PC-9 (cell line): ENCODE measurements at regions of chr12 and their contacts with region 1.

Region 1: GRCh38 chr12:99879439-99879838 is 105.3 kb downstream of the ANKS1B start:
- DNase-seq: no peak
- H3K4me3 ChIP-seq: no peak overlapping the region
- H3K27ac ChIP-seq: no peak overlapping the region
- H3K4me1 ChIP-seq: no peaks in the 10 kb centered on the region
- H3K27me3 ChIP-seq: peaks cover 23% of the 10 kb centered on the region; the same call in 1 of the 2 replicates
- CTCF ChIP-seq: no peak

Region 2: DNA sequence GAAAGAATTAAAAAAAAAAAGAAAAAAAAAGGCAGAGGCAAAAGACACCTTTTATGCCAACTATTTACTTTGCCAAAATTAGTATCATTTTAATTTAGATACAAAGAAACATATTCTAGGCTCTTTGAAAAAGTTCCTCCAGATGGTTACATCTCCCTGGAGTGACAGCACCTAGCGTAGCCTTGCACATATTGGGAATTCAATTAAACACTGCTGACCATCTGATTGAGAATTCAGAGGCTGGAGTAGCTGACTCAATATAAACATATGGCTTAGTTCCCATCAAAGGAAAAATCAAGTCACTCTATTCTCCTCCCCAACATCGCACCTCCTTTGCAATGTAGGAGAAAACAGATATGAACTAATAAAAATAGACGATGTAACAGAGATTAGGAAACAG is 68.9 kb after region 1 on chr12:
- CTCF ChIA-PET with region 1: no interaction called
- POLR2A ChIA-PET with region 1: no interaction called
- intact Hi-C with region 1: no loop called
- DNase-seq: no peak
- H3K4me3 ChIP-seq: no peak overlapping the region
- H3K27ac ChIP-seq: no peak overlapping the region
- H3K4me1 ChIP-seq: no peaks in the 10 kb centered on the region
- H3K27me3 ChIP-seq: peaks cover 47% of the 10 kb centered on the region
- CTCF ChIP-seq: no peak

Region 3: DNA sequence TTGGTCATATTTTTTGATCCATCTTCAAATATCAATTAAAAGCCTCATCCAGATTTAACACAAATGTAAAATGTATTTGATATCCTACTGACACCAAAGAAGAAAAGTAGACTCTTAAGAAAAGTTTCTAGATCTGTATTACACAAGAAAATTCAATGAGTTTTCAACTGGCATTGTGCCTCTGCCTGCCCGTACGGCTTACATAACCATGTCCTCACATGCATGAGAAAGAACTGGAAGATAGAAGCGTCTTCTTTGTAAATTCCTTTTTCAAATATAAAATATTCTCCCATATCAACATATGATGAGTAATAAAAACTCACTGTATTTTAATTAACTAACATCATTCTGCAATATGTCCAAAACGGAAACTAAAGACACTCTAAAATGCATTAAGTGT is 98.1 kb after region 1 on chr12:
- CTCF ChIA-PET with region 1: no interaction called
- POLR2A ChIA-PET with region 1: no interaction called
- intact Hi-C with region 1: no loop called
- DNase-seq: no peak
- H3K4me3 ChIP-seq: no peak overlapping the region
- H3K27ac ChIP-seq: no peak overlapping the region
- H3K4me1 ChIP-seq: no peaks in the 10 kb centered on the region
- H3K27me3 ChIP-seq: peaks cover 13% of the 10 kb centered on the region; the same call in 1 of the 2 replicates
- CTCF ChIP-seq: no peak

Region 4: GRCh38 chr12:101230547-101230946 is 1351.1 kb after region 1 on chr12:
- CTCF ChIA-PET with region 1: interaction called, 11 read pairs
- POLR2A ChIA-PET with region 1: no interaction called
- intact Hi-C with region 1: no loop called
- DNase-seq: no peak
- H3K4me3 ChIP-seq: no peak overlapping the region
- H3K27ac ChIP-seq: no peak overlapping the region
- H3K4me1 ChIP-seq: no peaks in the 10 kb centered on the region
- H3K27me3 ChIP-seq: peaks cover 29% of the 10 kb centered on the region; the same call in 1 of the 2 replicates
- CTCF ChIP-seq: no peak